Naive thymus-derived CD4-positive, alpha-beta T cell (primary cell): ENCODE measurements at regions of chr2 and their contacts with region 1.

Region 1: DNA sequence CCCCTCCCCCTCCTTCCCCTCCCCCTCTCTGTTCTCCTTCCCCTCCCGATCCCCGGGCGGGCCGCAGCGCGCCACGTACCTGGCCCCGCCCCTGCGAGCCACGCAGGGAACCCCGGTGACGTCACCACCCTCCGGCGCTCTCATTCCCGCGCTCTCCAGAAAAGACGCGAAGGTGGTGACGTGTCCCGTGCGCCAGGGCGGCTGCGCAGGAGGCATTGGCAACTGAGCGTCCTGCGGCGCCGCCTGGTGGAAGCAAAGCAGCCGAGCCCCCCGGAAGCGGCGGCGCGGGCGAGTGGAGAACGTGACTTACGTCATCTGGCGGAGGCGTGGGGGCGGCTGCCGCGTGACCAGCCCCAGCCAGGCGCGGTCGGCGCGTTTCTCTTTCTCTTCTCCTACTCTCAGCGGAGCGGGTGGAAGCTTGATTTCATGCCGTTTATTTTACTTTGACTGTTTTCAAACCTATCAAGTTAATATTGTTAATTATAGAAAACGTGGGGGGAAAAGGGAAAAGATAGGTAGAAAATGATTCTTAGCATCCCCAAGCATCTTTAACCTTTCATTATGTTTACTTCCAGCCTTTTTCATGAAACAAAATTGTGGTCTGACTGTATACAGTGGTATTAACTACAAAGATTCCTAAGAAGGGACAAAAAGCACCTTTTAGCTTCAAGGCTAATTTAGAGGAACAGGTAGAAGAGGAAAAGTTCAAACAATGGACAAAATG is 48.1 kb downstream of the C2orf42 start:
- DNase-seq: peak; percentile 99 to 100 (median 100)
- ATAC-seq: peak; percentile 85
- H3K4me3 ChIP-seq: peak overlapping the region; percentile 81
- H3K4me3 Mint-ChIP-seq: peak overlapping the region; percentile 83 to 96 (median 91)
- H3K27ac ChIP-seq: peak overlapping the region; percentile 97
- H3K27ac Mint-ChIP-seq: peak overlapping the region; percentile 97 to 99 (median 97)
- H3K4me1 ChIP-seq: peaks cover 27 to 39% of the 10 kb centered on the region in 2 donors
- H3K4me1 Mint-ChIP-seq: peaks cover 37 to 69% (median 55%) of the 10 kb centered on the region in 7 donors
- H3K27me3 ChIP-seq: no peaks in the 10 kb centered on the region
- H3K27me3 Mint-ChIP-seq: peaks cover 0 to 2% (median 0%) of the 10 kb centered on the region in 5 donors

Region 2: GRCh38 chr2:69893684-69894551 is 248.8 kb before region 1 on chr2 and contains the start of gene SNRNP27:
- CTCF ChIA-PET with region 1: no interaction called
- POLR2A ChIA-PET with region 1: interaction called, 11 read pairs
- intact Hi-C with region 1: no loop called
- DNase-seq: peak; percentile 62 to 84 (median 77)
- ATAC-seq: peak; percentile 90
- H3K4me3 ChIP-seq: peak within 1 kb of the TSS; percentile 67
- H3K4me3 Mint-ChIP-seq: peak within 1 kb of the TSS; percentile 90 to 100 (median 99)
- H3K27ac ChIP-seq: peak within 1 kb of the TSS; percentile 91
- H3K27ac Mint-ChIP-seq: peak within 1 kb of the TSS; percentile 93 to 100 (median 99)
- H3K4me1 ChIP-seq: peaks cover 12 to 17% of the 10 kb centered on the region in 2 donors
- H3K4me1 Mint-ChIP-seq: peaks cover 12 to 56% (median 43%) of the 10 kb centered on the region in 7 donors
- H3K27me3 ChIP-seq: no peaks in the 10 kb centered on the region
- H3K27me3 Mint-ChIP-seq: no peaks in the 10 kb centered on the region
- total RNA-seq, gene SNRNP27: 32.5 to 56.0 (median 51.5) TPM

Region 3: DNA sequence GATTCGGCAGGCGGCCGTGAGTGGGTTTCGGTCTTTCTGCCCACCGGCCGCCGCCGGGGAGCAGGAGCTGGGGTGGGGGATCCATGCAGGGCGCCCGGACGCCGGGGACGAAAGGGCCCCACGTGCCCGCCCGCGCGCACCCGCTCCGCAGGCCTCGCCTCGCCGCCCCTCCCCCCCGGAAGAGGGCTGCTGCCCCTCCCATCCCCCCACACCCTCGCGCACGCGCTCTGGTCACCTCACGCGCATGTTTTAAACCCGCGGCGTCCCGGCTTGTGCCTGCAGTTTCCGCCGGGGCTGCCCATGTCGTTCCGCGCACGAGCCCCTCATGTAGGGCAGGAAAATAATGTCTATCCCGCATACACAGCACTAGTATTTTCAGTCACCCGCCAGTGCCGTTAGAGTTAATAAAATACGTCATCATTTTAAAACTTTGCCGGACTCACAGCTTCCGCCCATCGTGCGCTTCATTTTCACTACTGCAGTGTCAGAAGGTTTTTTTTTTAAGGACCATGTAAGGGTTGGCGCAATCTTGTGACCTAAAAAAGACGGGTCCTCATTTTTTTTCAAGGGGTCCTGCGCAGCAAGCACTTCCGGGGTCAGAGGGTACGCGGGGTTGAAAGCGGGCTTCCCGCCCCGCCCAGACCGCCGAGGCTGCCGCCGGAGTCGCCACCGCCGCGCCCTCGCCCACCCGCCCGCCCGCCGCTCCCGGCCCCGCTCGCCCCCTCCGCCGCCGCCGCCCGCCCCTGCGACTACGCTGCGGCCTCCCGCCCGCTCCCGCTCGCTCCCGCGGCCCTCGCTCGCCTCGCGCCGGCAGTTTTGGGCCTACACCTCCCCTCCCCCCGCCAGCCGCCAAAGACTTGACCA is 55.7 kb before region 1 on chr2 and contains the start of gene PCBP1:
- CTCF ChIA-PET with region 1: interaction called, 30 read pairs
- POLR2A ChIA-PET with region 1: interaction called, 1,973 read pairs
- intact Hi-C with region 1: loop called (anchors 1 kb)
- DNase-seq: peak; percentile 94 to 100 (median 98)
- ATAC-seq: peak; percentile 83
- H3K4me3 ChIP-seq: peak within 1 kb of the TSS; percentile 86
- H3K4me3 Mint-ChIP-seq: peak within 1 kb of the TSS; percentile 91 to 98 (median 97)
- H3K27ac ChIP-seq: peak within 1 kb of the TSS; percentile 100
- H3K27ac Mint-ChIP-seq: peak within 1 kb of the TSS; percentile 99 to 100 (median 100)
- H3K4me1 ChIP-seq: peaks cover 55 to 59% of the 10 kb centered on the region in 2 donors
- H3K4me1 Mint-ChIP-seq: peaks cover 40 to 67% (median 59%) of the 10 kb centered on the region in 7 donors
- H3K27me3 ChIP-seq: no peaks in the 10 kb centered on the region
- H3K27me3 Mint-ChIP-seq: peaks cover 0 to 4% (median 0%) of the 10 kb centered on the region in 5 donors
- total RNA-seq, gene PCBP1: 257 to 487 (median 368) TPM

Region 4: GRCh38 chr2:70124983-70125480 is 17.7 kb before region 1 on chr2:
- CTCF ChIA-PET with region 1: interaction called, 24 read pairs
- POLR2A ChIA-PET with region 1: interaction called, 570 read pairs
- intact Hi-C with region 1: loop called (anchors 1 kb)
- DNase-seq: peak in 6 of 9 donors; percentile 59 to 74 (median 70)
- ATAC-seq: peak; percentile 74
- H3K4me3 ChIP-seq: peak overlapping the region; percentile 92
- H3K4me3 Mint-ChIP-seq: peak overlapping the region; percentile 84 to 99 (median 96)
- H3K27ac ChIP-seq: peak overlapping the region; percentile 97
- H3K27ac Mint-ChIP-seq: peak overlapping the region; percentile 96 to 100 (median 99)
- H3K4me1 ChIP-seq: peaks cover 52 to 54% of the 10 kb centered on the region in 2 donors
- H3K4me1 Mint-ChIP-seq: peaks cover 46 to 82% (median 70%) of the 10 kb centered on the region in 7 donors
- H3K27me3 ChIP-seq: no peaks in the 10 kb centered on the region
- H3K27me3 Mint-ChIP-seq: no peaks in the 10 kb centered on the region

Region 5: GRCh38 chr2:70161069-70161534 is 18.4 kb after region 1 on chr2:
- CTCF ChIA-PET with region 1: no interaction called
- POLR2A ChIA-PET with region 1: interaction called, 10 read pairs
- intact Hi-C with region 1: no loop called
- DNase-seq: peak in 7 of 9 donors; percentile 8 to 46 (median 40)
- ATAC-seq: peak; percentile 51
- H3K4me3 ChIP-seq: no peak overlapping the region
- H3K4me3 Mint-ChIP-seq: peak overlapping the region in 6 of 10 donors; percentile 1 to 62 (median 27)
- H3K27ac ChIP-seq: peak overlapping the region; percentile 51
- H3K27ac Mint-ChIP-seq: peak overlapping the region in 8 of 9 donors; percentile 37 to 91 (median 88)
- H3K4me1 ChIP-seq: no peaks in the 10 kb centered on the region
- H3K4me1 Mint-ChIP-seq: peaks cover 3 to 12% (median 9%) of the 10 kb centered on the region in 7 donors
- H3K27me3 ChIP-seq: no peaks in the 10 kb centered on the region
- H3K27me3 Mint-ChIP-seq: no peaks in the 10 kb centered on the region

Region 6: GRCh38 chr2:70258532-70258874 is 115.8 kb after region 1 on chr2:
- CTCF ChIA-PET with region 1: no interaction called
- POLR2A ChIA-PET with region 1: interaction called, 13 read pairs
- intact Hi-C with region 1: no loop called
- DNase-seq: peak in 2 of 9 donors; percentile 7 to 16
- ATAC-seq: no peak
- H3K4me3 ChIP-seq: peak overlapping the region; percentile 56
- H3K4me3 Mint-ChIP-seq: peak overlapping the region; percentile 88 to 96 (median 92)
- H3K27ac ChIP-seq: peak overlapping the region; percentile 71
- H3K27ac Mint-ChIP-seq: peak overlapping the region; percentile 58 to 93 (median 86)
- H3K4me1 ChIP-seq: peaks cover 7 to 21% of the 10 kb centered on the region in 2 donors
- H3K4me1 Mint-ChIP-seq: peaks cover 19 to 50% (median 46%) of the 10 kb centered on the region in 7 donors
- H3K27me3 ChIP-seq: no peaks in the 10 kb centered on the region
- H3K27me3 Mint-ChIP-seq: no peaks in the 10 kb centered on the region